ENCODE measurements at regions of chr3 and their contacts with region 1.

Region 1: GRCh38 chr3:169764452-169765274 is at the start of gene TERC:
- H3K4me3 Mint-ChIP-seq: peak within 1 kb of the TSS; percentile 94
- H3K27ac Mint-ChIP-seq: peak within 1 kb of the TSS; percentile 98
- H3K4me1 Mint-ChIP-seq: peaks cover 4% of the 10 kb centered on the region
- H3K27me3 Mint-ChIP-seq: no peaks in the 10 kb centered on the region

Region 2: DNA sequence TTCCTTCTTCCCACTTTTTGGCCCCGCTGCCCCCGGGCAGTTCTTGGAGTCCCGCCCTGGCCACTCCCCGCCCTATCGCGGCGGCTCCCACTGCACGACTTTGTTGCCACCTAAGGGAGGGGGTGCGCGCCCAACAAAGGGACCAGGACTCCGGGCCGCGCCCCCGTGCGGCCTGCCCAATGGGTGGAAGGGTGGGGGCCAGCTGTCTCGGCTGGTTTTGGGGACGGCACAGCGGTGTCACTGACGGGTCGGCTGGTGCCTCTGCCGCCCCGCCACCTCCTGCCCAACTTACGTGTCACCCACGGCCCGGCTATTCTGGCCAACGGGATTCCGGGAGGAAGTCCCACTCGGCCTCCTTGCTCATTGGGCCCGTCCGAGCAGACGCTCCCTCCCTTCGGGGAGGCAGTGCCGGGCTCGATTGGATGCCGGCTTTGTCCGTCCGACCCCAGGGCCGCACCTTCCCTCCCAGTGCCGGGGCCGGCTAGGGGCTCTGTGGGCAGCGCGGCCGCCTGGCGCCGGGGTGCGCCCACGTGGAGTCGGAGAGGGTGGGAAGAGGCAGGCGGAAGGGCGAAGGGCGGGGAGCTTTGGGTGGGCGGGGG is 1669.0 kb before region 1 on chr3 and contains the start of gene GOLIM4:
- intact Hi-C with region 1: loop called (anchors 10 kb)
- H3K4me3 Mint-ChIP-seq: peak within 1 kb of the TSS; percentile 92
- H3K27ac Mint-ChIP-seq: peak within 1 kb of the TSS; percentile 98
- H3K4me1 Mint-ChIP-seq: peaks cover 21% of the 10 kb centered on the region
- H3K27me3 Mint-ChIP-seq: no peaks in the 10 kb centered on the region

Region 3: GRCh38 chr3:168186293-168186983 is 1578.2 kb before region 1 on chr3:
- intact Hi-C with region 1: no loop called
- H3K4me3 Mint-ChIP-seq: no peak overlapping the region
- H3K27ac Mint-ChIP-seq: no peak overlapping the region
- H3K4me1 Mint-ChIP-seq: no peaks in the 10 kb centered on the region
- H3K27me3 Mint-ChIP-seq: no peaks in the 10 kb centered on the region

Region 4: GRCh38 chr3:169812332-169813235 is 47.9 kb after region 1 on chr3 and contains the starts of genes LRRC34 and LRRIQ4:
- intact Hi-C with region 1: loop called (anchors 1 kb)
- H3K4me3 Mint-ChIP-seq: peak within 1 kb of the TSS; percentile 80
- H3K27ac Mint-ChIP-seq: peak within 1 kb of the TSS; percentile 75
- H3K4me1 Mint-ChIP-seq: peaks cover 37% of the 10 kb centered on the region
- H3K27me3 Mint-ChIP-seq: peaks cover 22% of the 10 kb centered on the region

Region 5: DNA sequence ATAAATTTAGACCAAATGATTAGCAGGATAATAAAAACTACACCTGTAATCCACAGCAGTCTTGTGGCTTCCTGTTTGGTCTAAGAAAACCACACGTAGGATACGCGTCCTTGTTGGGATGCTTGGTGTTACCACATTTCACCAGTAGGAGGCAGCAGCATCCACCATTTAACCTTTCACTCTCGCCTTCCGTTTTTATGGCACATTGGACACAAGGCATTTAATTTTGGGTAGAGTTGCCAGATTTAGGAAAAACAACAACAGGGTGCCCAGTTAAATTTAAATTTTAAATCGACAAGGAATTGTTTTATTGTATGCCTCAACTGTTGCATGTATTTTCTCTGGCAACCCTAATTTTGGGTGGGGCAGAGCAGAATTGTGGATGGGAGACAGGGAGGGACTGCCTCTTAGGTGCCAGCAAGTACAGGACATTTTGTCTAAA is 98.8 kb after region 1 on chr3:
- intact Hi-C with region 1: loop called (anchors 10 kb)
- H3K4me3 Mint-ChIP-seq: no peak overlapping the region
- H3K27ac Mint-ChIP-seq: no peak overlapping the region
- H3K4me1 Mint-ChIP-seq: peaks cover 11% of the 10 kb centered on the region
- H3K27me3 Mint-ChIP-seq: peaks cover 9% of the 10 kb centered on the region

Region 6: DNA sequence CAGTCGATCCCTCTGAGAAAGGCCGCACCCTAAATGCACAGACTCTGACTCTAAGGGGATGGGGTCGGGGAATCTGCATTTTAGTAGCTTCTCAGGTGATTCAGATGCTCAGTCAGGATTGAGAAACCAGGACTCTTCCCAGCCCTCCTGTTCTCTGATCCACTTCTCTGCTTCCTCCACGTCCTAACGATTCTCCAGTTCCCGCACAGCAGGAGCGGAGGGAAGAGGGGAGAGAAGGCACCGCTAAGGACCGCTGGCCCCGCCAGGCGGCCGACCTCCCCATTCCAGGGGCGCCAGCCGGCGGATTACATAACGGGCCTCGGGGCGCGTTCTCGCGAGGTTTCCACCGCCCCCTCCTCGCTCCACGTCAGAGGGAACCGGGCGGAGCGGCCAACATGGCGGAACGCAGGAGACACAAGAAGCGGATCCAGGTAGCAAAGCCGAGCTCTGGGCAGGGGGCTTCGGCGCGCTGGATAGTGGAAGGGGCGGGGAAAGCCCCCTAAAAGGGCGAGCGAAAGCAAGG is 201.8 kb after region 1 on chr3 and contains the start of gene SEC62:
- intact Hi-C with region 1: loop called (anchors 5 kb)
- H3K4me3 Mint-ChIP-seq: peak within 1 kb of the TSS; percentile 92
- H3K27ac Mint-ChIP-seq: peak within 1 kb of the TSS; percentile 96
- H3K4me1 Mint-ChIP-seq: peaks cover 44% of the 10 kb centered on the region
- H3K27me3 Mint-ChIP-seq: peaks cover 3% of the 10 kb centered on the region

Region 7: DNA sequence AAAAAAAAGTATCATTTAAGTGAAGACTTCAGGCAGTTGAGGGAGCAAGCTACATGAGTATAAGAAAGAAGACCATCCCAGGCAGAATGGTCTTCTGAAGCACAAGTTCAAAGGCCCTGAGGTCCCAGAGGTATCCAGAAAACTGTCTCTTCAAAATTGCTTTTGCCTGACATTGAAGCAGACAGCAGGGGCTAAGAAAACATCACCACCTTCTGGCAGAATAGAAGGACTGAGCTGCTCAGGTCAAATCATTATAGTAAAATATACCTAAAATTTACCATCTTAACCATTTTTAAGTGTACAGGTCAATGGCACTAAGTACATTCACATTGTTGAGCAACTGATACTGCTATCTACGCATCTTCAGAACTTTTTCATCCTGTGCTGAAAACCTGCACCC is 289.5 kb after region 1 on chr3:
- intact Hi-C with region 1: loop called (anchors 5 kb)
- H3K4me3 Mint-ChIP-seq: no peak overlapping the region
- H3K27ac Mint-ChIP-seq: peak overlapping the region; percentile 12
- H3K4me1 Mint-ChIP-seq: peaks cover 24% of the 10 kb centered on the region
- H3K27me3 Mint-ChIP-seq: no peaks in the 10 kb centered on the region

Region 8: DNA sequence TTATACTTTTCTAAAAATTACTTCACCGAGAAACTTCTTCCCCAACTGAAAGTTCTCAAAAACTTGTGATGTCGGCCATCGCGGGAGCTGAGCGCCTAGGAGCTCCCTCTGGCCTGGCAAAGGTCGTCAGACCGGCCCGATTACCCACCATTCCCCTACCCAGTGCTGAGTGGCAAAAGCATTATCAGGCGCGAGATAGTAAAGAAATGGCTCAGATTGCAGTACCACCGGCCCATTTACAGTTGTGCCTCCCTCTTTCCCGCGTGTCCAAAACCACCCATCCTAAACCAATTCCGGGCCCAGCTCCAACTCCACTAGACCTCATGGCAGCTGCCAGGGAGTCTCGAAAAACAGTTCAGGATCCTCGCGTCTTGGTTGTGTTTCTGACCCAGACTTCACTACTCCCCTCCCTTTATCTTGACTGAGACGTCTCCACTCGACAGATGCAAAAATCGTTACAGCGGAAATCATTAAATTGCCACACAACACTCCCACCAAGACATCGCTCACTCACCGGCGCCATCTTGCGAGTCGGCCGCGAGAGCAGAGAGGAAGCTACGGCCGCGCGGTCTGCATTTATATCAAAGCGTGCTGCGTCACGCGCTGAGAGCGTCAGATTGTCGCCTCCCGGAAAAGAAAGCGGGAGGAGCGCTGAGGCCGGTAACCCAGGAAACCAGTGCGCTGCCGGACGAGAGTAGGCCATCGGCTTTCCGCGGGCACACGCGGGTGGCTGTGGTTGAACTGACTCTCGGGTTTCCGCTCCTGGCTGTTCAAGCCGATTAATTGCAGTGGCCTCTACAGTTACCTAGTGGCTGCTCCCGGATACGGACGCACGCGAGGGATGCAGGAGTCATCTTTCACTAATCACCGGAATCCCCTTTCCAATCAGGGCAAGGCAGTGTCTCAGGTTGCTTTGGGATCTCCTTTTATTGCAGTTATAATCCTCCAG is 1105.3 kb after region 1 on chr3 and contains the start of gene RPL22L1:
- intact Hi-C with region 1: loop called (anchors 10 kb)
- H3K4me3 Mint-ChIP-seq: peak within 1 kb of the TSS; percentile 96
- H3K27ac Mint-ChIP-seq: peak within 1 kb of the TSS; percentile 99
- H3K4me1 Mint-ChIP-seq: peaks cover 9% of the 10 kb centered on the region
- H3K27me3 Mint-ChIP-seq: no peaks in the 10 kb centered on the region

Measured in dendritic cell treated with granulocyte-macrophage colony-stimulating factor and Interleukin-4, amounts not matched to agents 40 ng/mL and 50 ng/mL, for 4 days (primary cell).